ENCODE measurements at regions of chr5 and their contacts with region 1.

Region 1: GRCh38 chr5:135944967-135945560 is 9.7 kb downstream of the LECT2 start:
- DNase-seq: peak; percentile 71
- H3K4me3 ChIP-seq: no peak overlapping the region
- H3K27ac ChIP-seq: no peak overlapping the region
- H3K4me1 ChIP-seq: no peaks in the 10 kb centered on the region
- H3K27me3 ChIP-seq: peaks cover 4 to 20% of the 10 kb centered on the region in 2 experiments
- CTCF ChIP-seq: peak; percentile 58 to 60
- POLR2A ChIP-seq: no peak

Region 2: DNA sequence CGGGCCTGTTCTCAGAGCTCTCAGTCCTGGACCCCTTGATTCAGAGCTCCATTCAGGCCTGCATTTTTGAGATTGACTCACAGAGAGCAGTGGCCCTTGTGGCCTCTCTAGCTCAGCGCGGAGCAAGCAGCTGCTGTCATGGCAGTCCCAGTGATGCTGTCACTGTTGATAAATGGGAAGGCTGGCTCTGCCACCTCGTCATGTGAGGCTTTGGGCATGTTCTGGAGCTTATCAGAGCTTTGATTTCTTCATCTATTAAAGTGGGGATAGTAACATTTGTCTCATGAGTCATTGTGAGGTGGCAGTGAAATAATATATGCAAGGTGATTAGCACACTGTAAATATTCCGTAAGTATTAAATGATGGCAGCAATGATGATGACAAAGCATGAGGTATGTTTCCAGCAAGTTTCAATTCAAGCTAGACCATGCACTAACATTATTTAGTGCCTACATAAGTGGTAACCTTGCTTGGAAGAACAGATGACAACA is 239.9 kb before region 1 on chr5:
- CTCF ChIA-PET with region 1: no interaction called
- POLR2A ChIA-PET with region 1: no interaction called
- dilution Hi-C with region 1: no loop called
- intact Hi-C with region 1: no loop called
- DNase-seq: no peak
- H3K4me3 ChIP-seq: no peak overlapping the region
- H3K27ac ChIP-seq: no peak overlapping the region
- H3K4me1 ChIP-seq: no peaks in the 10 kb centered on the region
- H3K27me3 ChIP-seq: no peaks in the 10 kb centered on the region
- CTCF ChIP-seq: no peak
- POLR2A ChIP-seq: no peak

Region 3: GRCh38 chr5:135887351-135887864 is 57.7 kb before region 1 on chr5:
- CTCF ChIA-PET with region 1: interaction called, 4 read pairs
- POLR2A ChIA-PET with region 1: no interaction called
- dilution Hi-C with region 1: no loop called
- intact Hi-C with region 1: loop called (anchors 1 kb)
- DNase-seq: peak; percentile 61
- H3K4me3 ChIP-seq: no peak overlapping the region
- H3K27ac ChIP-seq: no peak overlapping the region
- H3K4me1 ChIP-seq: no peaks in the 10 kb centered on the region
- H3K27me3 ChIP-seq: peaks cover 0 to 3% of the 10 kb centered on the region in 2 experiments
- CTCF ChIP-seq: peak; percentile 71 to 76
- POLR2A ChIP-seq: no peak

Region 4: DNA sequence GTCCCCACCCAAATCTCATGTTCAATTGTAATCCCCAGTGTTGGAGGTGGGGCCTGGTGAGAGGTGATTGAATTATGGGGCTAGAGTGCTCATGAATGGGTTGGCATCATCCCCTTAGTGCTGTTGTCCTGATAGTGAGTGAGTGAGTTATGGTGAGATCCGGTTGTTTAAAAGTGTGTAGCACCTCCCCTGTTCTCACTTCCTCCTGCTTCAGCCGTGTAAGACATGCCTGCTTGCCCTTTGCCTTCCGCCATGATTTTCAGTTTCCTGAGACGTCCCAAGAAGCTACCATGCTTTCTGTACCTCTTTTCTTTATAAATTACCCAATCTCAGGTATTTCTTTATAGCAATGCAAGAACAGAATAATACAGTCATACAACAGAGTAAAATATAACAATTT is 10.5 kb after region 1 on chr5:
- CTCF ChIA-PET with region 1: interaction called, 17 read pairs
- POLR2A ChIA-PET with region 1: no interaction called
- dilution Hi-C with region 1: no loop called
- intact Hi-C with region 1: no loop called
- DNase-seq: no peak
- H3K4me3 ChIP-seq: no peak overlapping the region
- H3K27ac ChIP-seq: no peak overlapping the region
- H3K4me1 ChIP-seq: no peaks in the 10 kb centered on the region
- H3K27me3 ChIP-seq: peaks cover 3 to 23% of the 10 kb centered on the region in 2 experiments
- CTCF ChIP-seq: no peak
- POLR2A ChIP-seq: no peak

Region 5: DNA sequence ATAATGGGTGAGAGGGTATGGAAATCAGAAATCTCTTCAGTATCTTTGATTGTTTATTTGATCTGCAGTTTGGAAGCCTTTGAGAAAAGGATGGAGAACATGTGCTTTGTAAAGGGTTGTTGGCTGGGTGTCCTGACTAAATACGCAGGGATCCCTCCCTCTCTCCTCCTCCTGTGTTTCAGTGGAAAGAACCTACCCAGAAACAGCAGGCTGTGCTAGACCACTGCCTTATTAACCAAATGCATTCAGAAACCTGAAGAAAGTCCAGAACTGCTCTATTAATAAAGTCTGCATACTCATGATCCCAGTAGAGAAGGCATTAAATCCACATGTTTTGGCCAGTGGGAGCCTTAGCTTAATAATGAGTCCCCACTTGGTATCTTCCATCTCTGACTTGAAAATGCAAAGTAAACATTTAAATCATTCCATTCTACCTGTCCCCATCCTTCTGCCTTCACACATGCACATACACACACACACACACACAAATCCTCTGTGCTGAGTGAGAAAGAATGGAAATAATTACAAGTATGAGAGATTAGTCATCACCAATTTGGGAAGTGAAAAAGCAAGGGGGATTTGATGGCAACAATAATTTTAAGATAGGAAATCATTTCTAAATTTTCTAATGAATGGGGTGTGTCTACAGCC is 19.7 kb after region 1 on chr5:
- CTCF ChIA-PET with region 1: interaction called, 11 read pairs
- POLR2A ChIA-PET with region 1: no interaction called
- dilution Hi-C with region 1: no loop called
- intact Hi-C with region 1: no loop called
- DNase-seq: no peak
- H3K4me3 ChIP-seq: no peak overlapping the region
- H3K27ac ChIP-seq: no peak overlapping the region
- H3K4me1 ChIP-seq: no peaks in the 10 kb centered on the region
- H3K27me3 ChIP-seq: peaks cover 2 to 20% of the 10 kb centered on the region in 2 experiments
- CTCF ChIP-seq: no peak
- POLR2A ChIP-seq: no peak

Region 6: GRCh38 chr5:136062366-136063274 is 117.6 kb after region 1 on chr5:
- CTCF ChIA-PET with region 1: interaction called, 99 read pairs
- POLR2A ChIA-PET with region 1: no interaction called
- dilution Hi-C with region 1: no loop called
- intact Hi-C with region 1: loop called (anchors 1 kb)
- DNase-seq: peak; percentile 40
- H3K4me3 ChIP-seq: no peak overlapping the region
- H3K27ac ChIP-seq: no peak overlapping the region
- H3K4me1 ChIP-seq: peaks cover 15% of the 10 kb centered on the region
- H3K27me3 ChIP-seq: no peaks in the 10 kb centered on the region
- CTCF ChIP-seq: peak; percentile 42 to 54
- POLR2A ChIP-seq: no peak

Region 7: GRCh38 chr5:136174021-136174659 is 229.1 kb after region 1 on chr5:
- CTCF ChIA-PET with region 1: interaction called, 4 read pairs
- POLR2A ChIA-PET with region 1: no interaction called
- dilution Hi-C with region 1: no loop called
- intact Hi-C with region 1: loop called (anchors 2 kb)
- DNase-seq: peak; percentile 57
- H3K4me3 ChIP-seq: no peak overlapping the region
- H3K27ac ChIP-seq: no peak overlapping the region
- H3K4me1 ChIP-seq: no peaks in the 10 kb centered on the region
- H3K27me3 ChIP-seq: no peaks in the 10 kb centered on the region
- CTCF ChIP-seq: peak; percentile 38 to 54
- POLR2A ChIP-seq: no peak

Region 8: DNA sequence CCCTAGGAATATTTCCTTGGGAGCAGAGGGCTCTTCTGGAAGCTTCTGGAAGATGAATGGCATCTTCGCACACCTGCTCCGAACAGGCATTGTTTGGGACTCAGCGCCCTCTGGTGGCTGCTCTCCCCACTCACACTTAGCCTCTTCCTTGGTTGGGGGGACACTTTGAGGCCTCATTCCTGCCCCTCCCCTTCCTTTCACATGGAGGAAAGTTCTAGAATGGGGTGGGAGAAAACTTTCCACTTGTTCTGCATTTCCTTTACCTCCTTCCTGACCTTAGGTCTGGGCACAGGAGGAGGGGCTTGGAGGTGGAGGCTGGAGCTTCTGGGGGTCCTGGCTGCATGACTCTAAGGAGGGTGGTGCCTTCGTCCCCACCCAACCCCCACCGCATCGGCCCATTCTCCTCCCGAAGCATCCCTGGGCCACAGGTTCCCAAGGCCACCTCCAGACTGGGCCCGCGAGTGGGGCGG is 267.2 kb after region 1 on chr5:
- CTCF ChIA-PET with region 1: interaction called, 28 read pairs
- POLR2A ChIA-PET with region 1: no interaction called
- dilution Hi-C with region 1: no loop called
- intact Hi-C with region 1: loop called (anchors 1 kb)
- DNase-seq: peak; percentile 37
- H3K4me3 ChIP-seq: no peak overlapping the region
- H3K27ac ChIP-seq: no peak overlapping the region
- H3K4me1 ChIP-seq: no peaks in the 10 kb centered on the region
- H3K27me3 ChIP-seq: peaks cover 3 to 5% of the 10 kb centered on the region in 2 experiments
- CTCF ChIP-seq: peak; percentile 85 to 94
- POLR2A ChIP-seq: no peak

Region 9: DNA sequence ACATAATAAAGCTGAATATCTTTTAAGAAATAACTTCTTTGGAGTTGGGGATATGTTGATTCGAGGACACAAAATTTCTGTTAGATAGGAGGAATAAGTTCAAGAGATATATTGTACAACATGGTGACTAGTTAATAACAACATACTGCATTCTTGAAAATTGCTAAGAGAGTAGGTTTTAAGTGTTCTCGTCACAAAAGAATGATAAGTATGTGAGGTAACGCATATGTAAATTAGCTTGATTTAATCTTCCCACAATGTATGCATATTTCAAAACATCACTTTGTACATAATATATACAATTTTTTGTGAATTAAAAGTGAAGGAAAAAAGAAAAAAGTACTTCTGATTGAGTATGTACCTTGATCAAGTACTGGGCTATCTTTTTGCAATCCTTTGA is 848.2 kb after region 1 on chr5:
- CTCF ChIA-PET with region 1: no interaction called
- POLR2A ChIA-PET with region 1: no interaction called
- dilution Hi-C with region 1: no loop called
- intact Hi-C with region 1: no loop called
- DNase-seq: no peak
- H3K4me3 ChIP-seq: no peak overlapping the region
- H3K27ac ChIP-seq: no peak overlapping the region
- H3K4me1 ChIP-seq: no peaks in the 10 kb centered on the region
- H3K27me3 ChIP-seq: peaks cover 2 to 5% of the 10 kb centered on the region in 2 experiments
- CTCF ChIP-seq: no peak
- POLR2A ChIP-seq: no peak

Measured in endothelial cell of umbilical vein (primary cell).